ENCODE measurements at regions of chr7 and their contacts with region 1.

Region 1: GRCh38 chr7:116395125-116395791 is 104.3 kb upstream of the CAV2 start:
- DNase-seq: no peak
- ATAC-seq: no peak

Region 2: GRCh38 chr7:116438267-116438666 is 43.0 kb after region 1 on chr7:
- intact Hi-C with region 1: loop called (anchors 5 kb)
- DNase-seq: no peak
- ATAC-seq: no peak

Measured in Right ventricle myocardium inferior (tissue), 1 donor.